Motor neuron (in vitro differentiated cells): ENCODE measurements at regions of chr10 and their contacts with region 1.

Region 1: DNA sequence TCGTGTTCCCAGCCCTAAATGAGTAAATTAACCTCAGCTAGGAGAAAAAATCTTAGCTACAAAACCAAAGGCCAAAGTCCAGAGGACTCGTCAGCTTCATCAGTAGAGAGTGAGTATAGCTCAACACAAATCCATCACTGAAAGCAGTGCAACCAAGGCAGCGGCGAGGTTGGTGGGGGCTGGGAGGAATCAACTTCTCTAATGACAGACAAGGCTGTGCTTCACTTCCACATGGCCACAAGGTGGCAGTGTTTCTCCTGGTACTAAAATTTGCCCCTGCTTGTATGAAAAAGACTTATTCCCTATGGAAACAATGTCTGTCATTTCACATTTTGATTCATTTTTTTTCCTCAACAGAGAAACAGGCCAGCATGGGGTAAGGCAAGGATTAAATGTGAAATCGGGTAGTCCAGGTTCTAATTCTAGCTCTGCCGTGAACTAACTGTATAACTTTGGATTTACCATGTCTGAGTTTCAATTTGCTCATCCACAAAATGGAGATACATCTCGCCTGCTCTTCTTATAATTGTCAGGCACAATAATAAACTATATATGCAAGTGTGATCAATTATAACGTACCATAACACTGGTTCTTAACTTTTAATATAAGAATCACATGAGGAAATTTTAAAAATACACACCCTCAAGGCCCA is 39.3 kb downstream of the FAS start:
- ATAC-seq: peak; percentile 13 to 73 (median 41)
- H3K4me3 ChIP-seq: no peak overlapping the region
- H3K27ac ChIP-seq: no peak overlapping the region
- H3K4me1 ChIP-seq: peaks cover 2 to 7% of the 10 kb centered on the region in 2 donors

Region 2: DNA sequence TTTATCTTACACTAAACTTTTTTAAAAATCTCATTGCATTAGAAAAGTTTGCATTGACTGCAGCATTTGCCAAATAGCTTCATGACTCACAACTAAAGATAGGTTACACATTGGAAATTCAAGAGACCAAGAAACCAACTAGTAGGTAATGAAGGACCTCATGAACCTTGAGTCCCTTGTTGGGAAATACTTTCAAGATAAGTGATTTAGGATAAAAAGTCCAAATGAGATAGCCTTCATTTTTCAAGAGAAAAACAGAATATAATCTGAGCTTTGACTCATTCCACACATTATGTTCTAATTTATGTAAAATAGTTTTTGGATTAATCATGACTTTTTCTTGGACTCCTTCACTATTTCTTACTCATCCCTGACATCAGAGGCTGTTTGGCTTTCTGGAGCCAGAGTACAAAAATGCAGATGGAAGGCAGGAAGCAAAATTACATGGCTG is 378.8 kb before region 1 on chr10:
- in situ Hi-C with region 1: no loop called
- ATAC-seq: peak in 2 of 8 experiments; percentile 91 to 94
- H3K4me3 ChIP-seq: no peak overlapping the region
- H3K27ac ChIP-seq: no peak overlapping the region
- H3K4me1 ChIP-seq: no peaks in the 10 kb centered on the region

Region 3: DNA sequence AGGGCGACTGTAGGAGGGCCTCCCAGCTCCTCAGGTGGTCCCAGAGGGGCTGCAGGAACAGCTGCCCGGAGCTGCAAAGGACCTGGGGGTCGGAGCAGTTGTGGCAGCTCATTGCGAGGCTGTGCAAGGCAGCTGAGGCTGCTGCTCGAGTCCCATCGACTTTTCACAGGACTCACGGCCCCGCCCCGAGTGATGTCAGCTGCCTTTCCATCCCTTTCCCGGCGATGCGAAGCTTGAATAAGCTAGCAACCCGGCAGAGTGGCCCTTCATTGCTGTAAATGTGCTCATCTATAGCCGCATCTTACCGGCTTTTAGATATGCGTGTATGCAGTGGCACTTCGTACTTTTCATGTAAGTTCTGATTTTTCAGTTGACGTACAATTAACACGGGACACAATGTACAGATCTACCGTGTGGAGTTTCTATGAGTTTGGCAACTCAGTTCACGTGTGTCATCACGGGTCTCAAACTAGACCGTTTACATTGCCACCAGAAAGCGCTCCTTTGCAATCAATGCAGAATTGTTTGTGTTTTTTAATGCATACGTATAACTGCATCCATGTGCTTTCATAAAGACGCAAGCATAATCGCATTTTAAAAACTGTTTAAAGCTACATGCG is 177.4 kb after region 1 on chr10 and contains the start of gene CH25H:
- in situ Hi-C with region 1: loop called in 7 of 9 experiments (anchors 5 to 25 kb)
- ATAC-seq: peak; percentile 81 to 95 (median 92)
- H3K4me3 ChIP-seq: peak within 1 kb of the TSS; percentile 24 to 45 (median 39)
- H3K27ac ChIP-seq: no peak within 1 kb of the TSS
- H3K4me1 ChIP-seq: peaks cover 3 to 8% of the 10 kb centered on the region in 2 donors
- total RNA-seq, gene CH25H: 0.17 to 7.1 (median 1.4) TPM

Region 4: GRCh38 chr10:89217057-89217990 is 187.4 kb after region 1 on chr10:
- in situ Hi-C with region 1: loop called in 6 of 9 experiments (anchors 5 to 25 kb)
- ATAC-seq: peak in 4 of 8 experiments; percentile 28 to 49 (median 36)
- H3K4me3 ChIP-seq: no peak overlapping the region
- H3K27ac ChIP-seq: no peak overlapping the region
- H3K4me1 ChIP-seq: peaks cover 0 to 3% of the 10 kb centered on the region in 2 donors

Region 5: GRCh38 chr10:89391917-89392756 is 362.2 kb after region 1 on chr10 and contains the start of gene IFIT1:
- in situ Hi-C with region 1: loop called in 2 of 9 experiments (anchors 25 kb)
- ATAC-seq: peak; percentile 78 to 89 (median 84)
- H3K4me3 ChIP-seq: peak within 1 kb of the TSS; percentile 18 to 42 (median 33)
- H3K27ac ChIP-seq: no peak within 1 kb of the TSS
- H3K4me1 ChIP-seq: peaks cover 3 to 7% of the 10 kb centered on the region in 2 donors
- total RNA-seq, gene IFIT1: 1.5 to 889 (median 8.4) TPM